MCF 10A (cell line): ENCODE measurements at regions of chr17 and their contacts with region 1.

Region 1: DNA sequence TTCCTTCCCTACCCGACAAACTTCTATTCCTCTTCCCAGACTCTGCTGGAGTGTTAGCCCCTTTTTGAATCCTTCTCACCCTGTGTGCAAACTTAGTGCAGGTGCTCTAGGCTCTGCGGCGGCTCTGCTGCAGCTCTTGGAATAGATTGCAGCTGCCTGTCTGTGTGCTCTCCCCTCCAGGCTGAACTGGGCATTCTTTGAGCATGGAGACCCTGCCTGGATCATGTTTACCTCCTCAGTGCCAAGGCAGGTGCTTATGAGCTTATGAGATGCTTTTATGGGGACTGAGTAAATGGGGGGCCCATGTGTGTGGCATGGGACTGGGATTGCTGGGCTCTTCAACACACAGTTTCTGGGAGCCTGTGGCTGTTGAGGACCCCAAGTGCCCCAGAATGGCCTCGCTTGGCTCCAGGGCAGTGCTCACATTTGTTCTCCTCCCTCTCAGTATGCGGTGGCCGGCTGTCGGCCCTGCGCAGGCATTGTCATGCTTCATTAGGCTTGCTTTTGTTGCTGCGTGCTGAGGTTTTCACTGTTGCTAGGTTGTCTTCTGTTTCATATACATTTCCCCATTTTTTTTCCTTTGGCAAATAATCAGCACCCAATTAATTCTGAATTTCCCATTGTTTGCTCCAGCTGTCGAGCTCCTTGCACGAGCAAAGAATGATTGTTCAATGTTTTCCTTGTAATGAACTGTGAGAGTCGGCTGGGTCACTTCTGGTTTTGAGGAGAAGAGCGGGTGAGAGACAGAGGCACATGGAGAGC is 185.5 kb upstream of the NLRP1 start:
- DNase-seq: no peak
- H3K4me3 Mint-ChIP-seq: no peak overlapping the region
- H3K27ac Mint-ChIP-seq: no peak overlapping the region
- H3K4me1 Mint-ChIP-seq: peaks cover 10% of the 10 kb centered on the region
- H3K27me3 Mint-ChIP-seq: peaks cover 23% of the 10 kb centered on the region
- CTCF ChIP-seq: no peak

Region 2: GRCh38 chr17:5780476-5780875 is 10.7 kb after region 1 on chr17:
- CTCF ChIA-PET with region 1: no interaction called
- POLR2A ChIA-PET with region 1: no interaction called
- intact Hi-C with region 1: no loop called
- DNase-seq: peak; percentile 82
- H3K4me3 Mint-ChIP-seq: no peak overlapping the region
- H3K27ac Mint-ChIP-seq: peak overlapping the region; percentile 9
- H3K4me1 Mint-ChIP-seq: peaks cover 36% of the 10 kb centered on the region
- H3K27me3 Mint-ChIP-seq: no peaks in the 10 kb centered on the region
- CTCF ChIP-seq: peak; percentile 22

Region 3: DNA sequence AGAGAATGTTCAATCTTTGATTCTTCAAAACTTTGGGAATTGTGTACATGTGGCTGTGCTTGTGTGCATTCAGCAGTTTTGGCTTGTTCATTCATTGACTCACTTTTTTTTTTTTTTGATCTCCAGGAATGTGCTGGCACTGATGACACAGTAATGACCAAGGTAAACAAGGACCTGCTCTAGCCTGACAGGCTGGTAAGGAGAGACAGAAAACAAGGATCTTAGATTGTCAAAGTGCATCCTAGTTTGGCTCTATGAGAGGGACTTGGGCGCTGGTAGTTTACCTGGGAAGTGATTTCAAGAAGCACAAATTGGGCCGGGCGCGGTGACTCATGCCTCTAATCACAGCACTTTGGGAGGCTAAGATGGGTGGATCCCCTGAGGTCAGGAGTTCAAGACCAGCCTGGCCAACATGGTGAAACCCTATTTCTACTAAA is 67.3 kb after region 1 on chr17:
- CTCF ChIA-PET with region 1: no interaction called
- POLR2A ChIA-PET with region 1: no interaction called
- intact Hi-C with region 1: no loop called
- DNase-seq: peak; percentile 86
- H3K4me3 Mint-ChIP-seq: no peak overlapping the region
- H3K27ac Mint-ChIP-seq: peak overlapping the region; percentile 93
- H3K4me1 Mint-ChIP-seq: peaks cover 33% of the 10 kb centered on the region
- H3K27me3 Mint-ChIP-seq: no peaks in the 10 kb centered on the region
- CTCF ChIP-seq: no peak

Region 4: GRCh38 chr17:6069539-6070429 is 300.0 kb after region 1 on chr17 and contains the start of gene WSCD1:
- CTCF ChIA-PET with region 1: no interaction called
- POLR2A ChIA-PET with region 1: no interaction called
- intact Hi-C with region 1: loop called (anchors 10 kb)
- DNase-seq: no peak
- H3K4me3 Mint-ChIP-seq: peak within 1 kb of the TSS; percentile 56
- H3K27ac Mint-ChIP-seq: no peak within 1 kb of the TSS
- H3K4me1 Mint-ChIP-seq: peaks cover 12% of the 10 kb centered on the region
- H3K27me3 Mint-ChIP-seq: peaks cover 66% of the 10 kb centered on the region
- CTCF ChIP-seq: no peak
- total RNA-seq, gene WSCD1: 0.44 TPM in 1 of 2 replicates, not detected in the other